Activated B cell treated with CpG ODN at 0.5 μM for 24 hours (primary cell): ENCODE measurements at regions of chr1 and their contacts with region 1.

Region 1: DNA sequence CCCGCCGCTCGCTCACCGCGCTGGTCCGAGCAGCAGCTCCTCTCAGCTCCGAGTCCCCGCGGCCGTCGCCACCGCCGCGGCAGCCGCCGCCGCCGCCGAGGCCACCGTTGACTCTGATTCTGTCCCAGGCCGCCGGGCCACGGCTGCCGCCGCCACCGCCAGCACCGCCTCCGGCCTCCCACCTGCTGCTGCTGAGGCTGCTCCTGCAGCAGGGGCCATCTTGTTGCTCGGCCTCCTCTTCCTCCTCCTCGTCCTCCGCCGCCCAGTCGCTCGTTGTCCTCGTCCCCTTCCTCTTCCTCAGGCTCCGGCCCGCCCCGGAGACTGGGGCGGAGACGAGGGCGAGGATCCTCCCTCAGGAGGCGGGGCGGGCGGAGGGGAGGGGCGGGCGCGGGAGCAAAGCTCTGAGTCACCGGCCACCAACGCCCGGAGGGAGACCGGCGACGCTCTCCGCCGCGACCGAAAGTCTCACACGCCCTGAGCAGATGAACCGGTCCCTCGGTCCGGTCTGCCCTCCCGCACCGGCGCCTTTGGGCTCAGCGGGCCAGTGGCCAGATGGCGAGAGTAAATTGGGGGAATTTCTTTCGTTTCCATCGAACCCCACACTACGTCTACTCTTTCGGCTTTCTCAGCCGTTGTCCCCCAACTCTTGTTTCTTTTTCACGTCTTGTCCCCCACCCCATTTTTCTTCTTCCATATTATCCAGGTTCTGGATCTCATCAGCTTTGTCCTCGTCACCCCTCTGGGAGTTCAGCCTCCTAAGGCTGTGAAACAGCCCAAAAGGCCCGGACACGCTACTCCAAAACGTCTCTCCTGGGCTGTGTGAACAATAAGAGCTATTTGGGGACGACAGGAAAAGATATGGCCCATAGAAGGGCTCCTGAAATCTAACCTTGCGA is at the start of gene RC3H1:
- DNase-seq: peak; percentile 88
- ATAC-seq: peak; percentile 93
- H3K4me3 Mint-ChIP-seq: peak within 1 kb of the TSS; percentile 97
- H3K27ac Mint-ChIP-seq: peak within 1 kb of the TSS; percentile 96
- H3K4me1 Mint-ChIP-seq: peaks cover 42% of the 10 kb centered on the region
- H3K27me3 Mint-ChIP-seq: no peaks in the 10 kb centered on the region
- CTCF ChIP-seq: no peak
- total RNA-seq, gene RC3H1: 45.6 and 55.6 TPM in 2 replicates

Region 2: GRCh38 chr1:172851077-172851476 is 1171.3 kb before region 1 on chr1:
- CTCF ChIA-PET with region 1: no interaction called
- POLR2A ChIA-PET with region 1: no interaction called
- intact Hi-C with region 1: no loop called
- DNase-seq: no peak
- ATAC-seq: no peak
- H3K4me3 Mint-ChIP-seq: no peak overlapping the region
- H3K27ac Mint-ChIP-seq: no peak overlapping the region
- H3K4me1 Mint-ChIP-seq: no peaks in the 10 kb centered on the region
- H3K27me3 Mint-ChIP-seq: no peaks in the 10 kb centered on the region
- CTCF ChIP-seq: no peak

Region 3: DNA sequence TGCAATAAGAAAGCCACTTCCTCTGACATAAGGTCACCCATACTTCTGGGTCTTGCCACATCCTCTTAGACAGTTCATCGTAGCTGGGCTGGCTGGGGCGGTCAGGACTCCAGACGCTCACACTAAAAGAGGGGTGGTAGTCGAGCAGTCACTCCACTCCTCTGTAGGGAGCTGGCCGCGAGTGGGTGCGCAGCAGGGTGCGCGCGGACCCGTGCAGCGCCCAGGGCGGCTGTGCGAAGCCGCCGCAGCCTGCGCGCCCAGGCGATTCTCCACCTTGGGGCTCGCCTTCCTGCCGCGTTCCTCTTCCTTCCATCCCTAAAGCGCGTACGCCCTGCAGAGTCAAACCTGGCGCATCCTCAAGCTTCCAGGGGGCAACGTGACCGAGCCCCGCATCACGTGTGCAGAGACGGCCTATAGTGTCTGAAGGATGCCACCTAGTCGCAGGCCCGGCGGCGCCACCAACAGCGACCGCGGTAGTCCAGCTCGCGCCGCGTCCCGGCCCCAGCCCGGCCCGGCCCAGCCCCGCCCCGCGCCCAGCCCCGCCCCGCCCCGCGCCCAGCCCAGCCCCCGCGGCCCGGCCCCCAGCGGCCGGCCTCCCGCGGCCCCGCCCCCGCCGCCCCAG is 545.6 kb before region 1 on chr1:
- CTCF ChIA-PET with region 1: no interaction called
- POLR2A ChIA-PET with region 1: interaction called, 6 read pairs
- intact Hi-C with region 1: loop called (anchors 1 kb)
- DNase-seq: peak; percentile 70
- ATAC-seq: peak; percentile 94
- H3K4me3 Mint-ChIP-seq: peak overlapping the region; percentile 92
- H3K27ac Mint-ChIP-seq: peak overlapping the region; percentile 95
- H3K4me1 Mint-ChIP-seq: peaks cover 40% of the 10 kb centered on the region
- H3K27me3 Mint-ChIP-seq: no peaks in the 10 kb centered on the region
- CTCF ChIP-seq: no peak

Region 4: DNA sequence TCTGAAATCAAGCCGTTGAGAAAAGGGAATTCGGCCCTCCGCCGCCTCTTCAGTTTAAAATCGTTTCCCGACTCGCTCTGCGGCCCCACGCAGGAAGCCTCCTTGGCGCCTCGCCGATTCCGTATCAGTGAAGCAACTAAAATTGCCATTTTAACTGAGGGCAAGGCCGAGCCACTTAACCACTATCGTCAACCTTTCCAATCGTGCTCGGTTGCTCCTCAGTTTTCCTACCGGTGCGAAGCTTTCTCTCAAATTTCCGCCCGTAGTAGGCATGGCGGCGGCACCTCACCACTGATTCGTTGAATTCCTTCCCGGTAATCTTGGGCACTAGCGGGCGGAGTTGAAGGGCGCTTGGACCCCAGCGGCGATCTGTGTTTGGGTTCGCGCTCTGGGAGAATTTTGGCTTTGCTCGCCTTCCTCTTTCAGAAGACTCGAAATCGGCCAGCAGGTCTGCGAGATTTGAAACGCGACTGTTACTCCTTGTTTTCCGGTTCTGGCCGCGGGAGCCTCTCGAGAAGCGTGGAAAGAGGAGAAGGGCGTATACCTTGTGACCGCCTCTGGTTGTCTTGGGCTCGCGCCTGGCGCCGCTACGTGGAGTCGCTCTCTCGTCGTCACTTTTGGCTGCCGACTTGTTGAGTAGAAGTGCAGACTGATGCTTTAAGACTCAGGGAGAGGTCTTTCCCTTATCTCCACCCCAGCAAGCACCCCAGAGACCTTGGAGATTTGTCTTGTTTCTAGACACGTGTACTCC is 197.8 kb before region 1 on chr1 and contains the starts of genes CENPL and DARS2:
- CTCF ChIA-PET with region 1: no interaction called
- POLR2A ChIA-PET with region 1: interaction called, 5 read pairs
- intact Hi-C with region 1: loop called (anchors 2 kb)
- DNase-seq: peak; percentile 80
- ATAC-seq: peak; percentile 89
- H3K4me3 Mint-ChIP-seq: peak within 1 kb of the TSS; percentile 95
- H3K27ac Mint-ChIP-seq: peak within 1 kb of the TSS; percentile 97
- H3K4me1 Mint-ChIP-seq: peaks cover 28% of the 10 kb centered on the region
- H3K27me3 Mint-ChIP-seq: no peaks in the 10 kb centered on the region
- CTCF ChIP-seq: no peak
- total RNA-seq, gene CENPL: 12.7 and 14.0 TPM in 2 replicates
- total RNA-seq, gene DARS2: 24.0 and 26.0 TPM in 2 replicates

Region 5: GRCh38 chr1:173857363-173857917 is 164.9 kb before region 1 on chr1:
- CTCF ChIA-PET with region 1: no interaction called
- POLR2A ChIA-PET with region 1: no interaction called
- intact Hi-C with region 1: no loop called
- DNase-seq: no peak
- ATAC-seq: no peak
- H3K4me3 Mint-ChIP-seq: no peak overlapping the region
- H3K27ac Mint-ChIP-seq: no peak overlapping the region
- H3K4me1 Mint-ChIP-seq: peaks cover 4% of the 10 kb centered on the region
- H3K27me3 Mint-ChIP-seq: no peaks in the 10 kb centered on the region
- CTCF ChIP-seq: no peak

Region 6: GRCh38 chr1:173997796-173998195 is 24.5 kb before region 1 on chr1:
- CTCF ChIA-PET with region 1: no interaction called
- POLR2A ChIA-PET with region 1: interaction called, 10 read pairs
- intact Hi-C with region 1: no loop called
- DNase-seq: no peak
- ATAC-seq: no peak
- H3K4me3 Mint-ChIP-seq: no peak overlapping the region
- H3K27ac Mint-ChIP-seq: no peak overlapping the region
- H3K4me1 Mint-ChIP-seq: peaks cover 55% of the 10 kb centered on the region
- H3K27me3 Mint-ChIP-seq: no peaks in the 10 kb centered on the region
- CTCF ChIP-seq: no peak

Region 7: GRCh38 chr1:174005032-174005431 is 17.3 kb before region 1 on chr1:
- CTCF ChIA-PET with region 1: no interaction called
- POLR2A ChIA-PET with region 1: interaction called, 22 read pairs
- intact Hi-C with region 1: loop called (anchors 2 kb)
- DNase-seq: no peak
- ATAC-seq: peak; percentile 92
- H3K4me3 Mint-ChIP-seq: no peak overlapping the region
- H3K27ac Mint-ChIP-seq: no peak overlapping the region
- H3K4me1 Mint-ChIP-seq: peaks cover 68% of the 10 kb centered on the region
- H3K27me3 Mint-ChIP-seq: no peaks in the 10 kb centered on the region
- CTCF ChIP-seq: no peak